Activated naive CD4-positive, alpha-beta T cell treated with anti-CD3 and anti-CD28 coated beads for 36 hours (primary cell): ENCODE measurements at regions of chr10 and their contacts with region 1.

Region 1: DNA sequence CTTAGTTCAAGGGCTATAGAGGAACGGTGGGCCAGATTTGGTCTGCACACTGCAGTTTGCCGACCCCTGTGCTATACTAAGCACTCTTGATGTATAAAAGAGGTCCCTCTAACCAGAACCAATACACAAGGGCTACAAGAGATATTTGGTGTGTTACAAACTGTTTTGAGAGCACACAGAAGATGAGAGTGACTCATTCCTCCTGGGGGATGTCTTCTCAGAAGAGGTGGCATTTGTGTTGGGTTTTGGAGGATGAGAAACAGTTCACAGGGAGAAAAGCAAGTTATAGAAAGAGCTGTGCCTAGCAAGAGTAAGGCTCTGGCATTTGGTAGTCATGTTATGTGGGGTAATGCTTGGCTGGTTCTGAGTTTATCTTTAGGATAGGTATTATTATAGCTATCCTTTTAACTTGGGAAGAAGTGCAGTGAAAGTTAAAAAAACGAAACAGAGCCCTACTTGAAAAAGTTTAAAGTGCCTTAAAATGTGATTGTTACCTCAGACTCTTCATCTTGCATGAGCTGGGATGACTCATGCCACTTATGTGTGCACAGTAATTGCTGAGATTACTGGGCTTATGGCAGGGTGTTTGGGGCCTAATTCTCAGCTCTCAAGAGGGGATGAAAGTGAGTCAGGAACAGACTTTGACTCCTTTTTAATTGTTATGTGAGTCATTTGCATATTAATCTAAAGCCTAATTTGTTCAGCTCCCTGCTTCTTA is 160.4 kb downstream of the KIF20B start:
- DNase-seq: peak; percentile 69
- H3K4me3 Mint-ChIP-seq: no peak overlapping the region
- H3K27ac Mint-ChIP-seq: peak overlapping the region; percentile 83
- H3K4me1 Mint-ChIP-seq: peaks cover 27% of the 10 kb centered on the region
- H3K27me3 Mint-ChIP-seq: no peaks in the 10 kb centered on the region

Region 2: DNA sequence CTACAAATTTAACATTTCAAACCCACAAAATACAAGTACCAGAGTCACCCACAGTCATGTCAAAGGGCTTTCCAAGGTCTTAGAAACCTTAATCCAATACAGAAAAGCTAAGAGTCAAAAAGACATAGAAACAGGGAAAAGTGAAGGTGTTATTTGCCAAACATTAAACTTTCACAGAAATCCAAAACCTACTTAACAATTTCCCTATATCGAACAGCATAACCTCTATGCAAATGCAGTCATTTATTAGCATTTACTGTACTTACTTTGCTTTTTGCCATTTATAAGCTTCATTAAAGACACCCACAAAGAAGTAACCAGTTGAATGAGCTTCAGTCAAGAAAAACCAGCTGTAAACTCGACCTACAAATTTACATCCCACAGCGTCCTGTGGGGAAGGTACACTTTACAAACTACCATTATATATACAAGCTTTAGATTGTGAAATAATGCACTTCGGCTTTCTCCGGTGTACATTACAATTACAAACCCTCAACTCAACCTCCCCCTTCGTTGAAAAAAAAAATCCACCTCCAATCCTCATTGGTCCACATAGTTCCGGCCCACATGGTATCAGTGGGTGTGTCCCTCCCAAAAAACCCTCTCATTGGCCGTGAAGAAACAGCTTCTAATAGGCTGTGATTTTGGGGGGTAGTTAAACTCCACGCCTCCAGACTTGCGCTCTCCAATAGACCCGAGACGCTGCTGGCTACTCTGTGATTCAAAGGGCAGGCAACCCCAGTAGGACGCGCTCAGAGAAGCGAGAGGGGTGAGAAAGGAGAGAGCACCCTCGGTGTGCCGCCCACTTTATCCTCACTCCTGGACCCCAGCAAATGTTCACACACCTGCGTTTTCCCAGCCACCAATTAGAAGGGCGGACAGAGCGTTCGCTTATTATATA is 218.1 kb before region 1 on chr10:
- CTCF ChIA-PET with region 1: no interaction called
- intact Hi-C with region 1: loop called (anchors 2 kb)
- DNase-seq: peak; percentile 79
- H3K4me3 Mint-ChIP-seq: no peak overlapping the region
- H3K27ac Mint-ChIP-seq: no peak overlapping the region
- H3K4me1 Mint-ChIP-seq: peaks cover 8% of the 10 kb centered on the region
- H3K27me3 Mint-ChIP-seq: peaks cover 4% of the 10 kb centered on the region

Region 3: DNA sequence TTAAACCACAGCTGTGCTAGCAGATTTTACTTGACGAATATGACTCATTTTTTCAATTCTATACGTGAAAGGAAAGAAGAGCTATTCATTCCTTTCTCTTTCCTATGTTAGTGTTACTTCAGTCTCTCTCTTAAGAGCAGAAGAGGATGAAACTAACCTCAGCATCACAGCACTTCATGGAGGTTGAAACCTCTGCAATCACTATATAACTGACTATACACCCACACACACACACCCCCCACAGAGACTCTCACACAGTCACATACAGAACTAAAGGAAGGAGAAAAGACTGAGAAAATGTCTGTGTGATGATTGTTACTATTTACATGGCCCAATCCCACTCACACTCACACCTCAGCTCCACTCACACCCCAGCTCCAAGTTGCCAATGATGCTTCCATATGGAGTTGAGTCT is 56.1 kb before region 1 on chr10:
- CTCF ChIA-PET with region 1: interaction called, 3 read pairs
- intact Hi-C with region 1: loop called (anchors 1 kb)
- DNase-seq: peak; percentile 90
- H3K4me3 Mint-ChIP-seq: no peak overlapping the region
- H3K27ac Mint-ChIP-seq: peak overlapping the region; percentile 27
- H3K4me1 Mint-ChIP-seq: peaks cover 26% of the 10 kb centered on the region
- H3K27me3 Mint-ChIP-seq: peaks cover 33% of the 10 kb centered on the region

Region 4: DNA sequence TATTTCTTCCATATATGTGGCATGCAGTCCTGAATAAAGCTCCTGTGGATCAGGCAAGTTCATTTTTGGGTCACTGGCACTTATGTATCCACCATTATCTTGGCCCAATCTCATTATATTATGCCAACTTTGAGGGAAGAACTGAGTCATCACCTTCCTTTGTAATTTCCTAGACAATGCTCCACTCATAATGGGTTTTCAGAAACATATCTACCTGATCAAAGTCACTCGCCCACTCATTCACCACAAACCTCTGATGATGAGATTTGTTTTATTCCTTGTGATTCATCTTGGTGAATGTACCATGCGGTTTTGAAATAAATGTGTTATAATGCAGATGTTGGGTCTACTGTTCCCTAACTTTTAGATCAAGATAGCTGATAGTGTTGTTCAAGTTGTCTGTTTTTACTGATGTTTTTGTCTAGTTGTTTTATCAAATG is 365.5 kb after region 1 on chr10:
- CTCF ChIA-PET with region 1: no interaction called
- intact Hi-C with region 1: loop called (anchors 1 kb)
- DNase-seq: peak; percentile 82
- H3K4me3 Mint-ChIP-seq: no peak overlapping the region
- H3K27ac Mint-ChIP-seq: no peak overlapping the region
- H3K4me1 Mint-ChIP-seq: peaks cover 13% of the 10 kb centered on the region
- H3K27me3 Mint-ChIP-seq: peaks cover 26% of the 10 kb centered on the region

Region 5: GRCh38 chr10:91198781-91199180 is 1337.0 kb after region 1 on chr10:
- CTCF ChIA-PET with region 1: no interaction called
- intact Hi-C with region 1: loop called (anchors 5 kb)
- DNase-seq: peak; percentile 37
- H3K4me3 Mint-ChIP-seq: no peak overlapping the region
- H3K27ac Mint-ChIP-seq: peak overlapping the region; percentile 13
- H3K4me1 Mint-ChIP-seq: peaks cover 77% of the 10 kb centered on the region
- H3K27me3 Mint-ChIP-seq: no peaks in the 10 kb centered on the region